ENCODE measurements at regions of chr19 and their contacts with region 1.

Region 1: GRCh38 chr19:39052243-39052746 is 19.9 kb upstream of the FBXO27 start:
- DNase-seq: peak; percentile 45 to 72
- H3K4me3 ChIP-seq: no peak overlapping the region
- H3K27ac ChIP-seq: no peak overlapping the region
- H3K4me1 ChIP-seq: peaks cover under 1% of the 10 kb centered on the region; the same call in 1 of the 2 replicates
- H3K27me3 ChIP-seq: no peaks in the 10 kb centered on the region
- CTCF ChIP-seq: peak; percentile 96

Region 2: GRCh38 chr19:38514812-38515633 is 537.3 kb before region 1 on chr19:
- CTCF ChIA-PET with region 1: interaction called, 10 read pairs
- POLR2A ChIA-PET with region 1: no interaction called
- intact Hi-C with region 1: no loop called
- DNase-seq: peak in 1 of 2 experiments; percentile 70
- H3K4me3 ChIP-seq: no peak overlapping the region
- H3K27ac ChIP-seq: no peak overlapping the region
- H3K4me1 ChIP-seq: no peaks in the 10 kb centered on the region
- H3K27me3 ChIP-seq: peaks cover 15% of the 10 kb centered on the region; the same call in 1 of the 2 replicates
- CTCF ChIP-seq: peak; percentile 90

Region 3: GRCh38 chr19:39110263-39110967 is 58.1 kb after region 1 on chr19:
- CTCF ChIA-PET with region 1: interaction called, 4 read pairs
- POLR2A ChIA-PET with region 1: no interaction called
- intact Hi-C with region 1: loop called (anchors 10 kb)
- DNase-seq: peak; percentile 42 to 65
- H3K4me3 ChIP-seq: no peak overlapping the region
- H3K27ac ChIP-seq: peak overlapping the region; percentile 88
- H3K4me1 ChIP-seq: peaks cover 23% of the 10 kb centered on the region
- H3K27me3 ChIP-seq: no peaks in the 10 kb centered on the region
- CTCF ChIP-seq: peak; percentile 90

Region 4: GRCh38 chr19:39187559-39187957 is 135.3 kb after region 1 on chr19:
- CTCF ChIA-PET with region 1: no interaction called
- POLR2A ChIA-PET with region 1: no interaction called
- intact Hi-C with region 1: loop called (anchors 5 kb)
- DNase-seq: no peak
- H3K4me3 ChIP-seq: no peak overlapping the region
- H3K27ac ChIP-seq: no peak overlapping the region
- H3K4me1 ChIP-seq: no peaks in the 10 kb centered on the region
- H3K27me3 ChIP-seq: no peaks in the 10 kb centered on the region
- CTCF ChIP-seq: peak; percentile 72

Region 5: GRCh38 chr19:39199025-39199424 is 146.7 kb after region 1 on chr19:
- CTCF ChIA-PET with region 1: interaction called, 10 read pairs
- POLR2A ChIA-PET with region 1: no interaction called
- intact Hi-C with region 1: no loop called
- DNase-seq: no peak
- H3K4me3 ChIP-seq: no peak overlapping the region
- H3K27ac ChIP-seq: no peak overlapping the region
- H3K4me1 ChIP-seq: peaks cover 48% of the 10 kb centered on the region
- H3K27me3 ChIP-seq: no peaks in the 10 kb centered on the region
- CTCF ChIP-seq: no peak

Region 6: DNA sequence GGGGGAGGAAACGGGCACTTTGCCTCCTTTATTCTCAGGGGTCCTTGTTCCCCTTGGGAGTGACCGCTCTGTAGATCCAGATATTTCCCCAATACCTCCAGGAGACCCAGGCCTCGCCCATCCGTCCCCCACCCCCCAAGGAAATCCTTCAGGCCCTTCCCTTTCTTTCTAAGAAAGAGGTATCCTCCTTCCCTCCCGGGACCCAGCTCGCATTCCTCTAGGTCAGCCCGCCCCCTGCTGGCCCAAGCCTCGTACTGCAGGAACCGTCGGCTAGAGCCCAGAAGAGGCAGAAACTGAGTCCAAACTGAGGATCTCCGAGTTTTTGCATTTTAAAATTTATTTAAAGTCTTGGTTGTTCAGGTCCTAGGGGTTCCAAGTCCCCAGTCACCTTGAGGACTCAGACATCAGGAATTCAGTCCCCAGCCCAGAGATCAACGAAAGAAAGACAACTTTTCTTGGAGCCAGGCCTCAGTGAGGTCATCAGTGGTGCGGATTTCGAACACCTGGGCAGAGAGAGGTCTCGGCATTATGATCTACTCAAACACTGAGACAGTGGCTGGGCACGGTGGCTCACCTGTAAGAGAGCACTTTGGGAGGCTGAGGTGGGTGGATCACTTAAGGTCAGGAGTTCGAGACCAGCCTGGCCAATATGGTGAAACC is 275.9 kb after region 1 on chr19:
- CTCF ChIA-PET with region 1: no interaction called
- POLR2A ChIA-PET with region 1: no interaction called
- intact Hi-C with region 1: loop called (anchors 5 kb)
- DNase-seq: peak; percentile 38 to 81
- H3K4me3 ChIP-seq: no peak overlapping the region
- H3K27ac ChIP-seq: no peak overlapping the region
- H3K4me1 ChIP-seq: no peaks in the 10 kb centered on the region
- H3K27me3 ChIP-seq: no peaks in the 10 kb centered on the region
- CTCF ChIP-seq: peak; percentile 97